ENCODE measurements at regions of chr1 and their contacts with region 1.

Region 1: DNA sequence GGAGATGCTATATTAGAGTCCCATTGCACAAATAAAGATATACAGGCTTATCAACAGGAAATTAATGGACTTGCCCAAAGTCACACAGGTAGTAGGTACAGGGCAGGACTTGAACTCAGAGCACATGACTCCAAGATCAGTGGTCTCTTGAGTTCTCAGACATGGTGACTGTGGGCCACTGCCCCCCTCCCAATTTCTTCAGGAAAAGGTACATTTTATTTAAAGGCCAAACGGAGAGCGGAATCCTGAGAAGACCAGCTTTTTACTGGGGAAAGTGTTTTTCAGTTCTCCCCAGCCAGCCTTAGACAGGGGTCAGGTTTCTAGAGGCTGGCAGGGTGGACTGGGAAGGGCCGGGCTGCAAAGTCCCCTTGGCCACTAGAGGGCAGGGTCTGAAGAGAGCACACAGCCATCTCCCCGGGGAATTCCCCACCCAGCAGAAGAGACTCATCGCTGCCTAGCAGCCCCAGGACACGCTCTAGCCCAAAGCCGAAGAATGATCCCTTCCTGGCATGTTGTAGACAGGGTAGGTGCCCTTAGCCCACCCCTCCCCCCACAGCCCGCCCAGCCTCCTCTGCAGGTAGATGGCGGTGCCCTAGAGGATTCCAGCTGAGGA is 29.7 kb downstream of the ACP6 start:
- DNase-seq: peak; percentile 85
- H3K4me3 Mint-ChIP-seq: no peak overlapping the region
- H3K27ac Mint-ChIP-seq: no peak overlapping the region
- H3K4me1 Mint-ChIP-seq: peaks cover 28% of the 10 kb centered on the region
- H3K27me3 Mint-ChIP-seq: no peaks in the 10 kb centered on the region

Region 2: GRCh38 chr1:147627435-147628110 is 13.1 kb before region 1 on chr1:
- CTCF ChIA-PET with region 1: interaction called, 15 read pairs
- DNase-seq: peak; percentile 63
- H3K4me3 Mint-ChIP-seq: no peak overlapping the region
- H3K27ac Mint-ChIP-seq: no peak overlapping the region
- H3K4me1 Mint-ChIP-seq: peaks cover 20% of the 10 kb centered on the region
- H3K27me3 Mint-ChIP-seq: peaks cover under 1% of the 10 kb centered on the region

Measured in activated naive CD4-positive, alpha-beta T cell treated with anti-CD3 and anti-CD28 coated beads, Interleukin-2, amount 10 ng/mL, durations not matched to agents 7 days and 5 days (primary cell).